A673 (cell line): ENCODE measurements at regions of chr11 and their contacts with region 1.

Region 1: GRCh38 chr11:71448257-71449171 is at the start of gene DHCR7:
- DNase-seq: peak; percentile 98
- H3K4me3 ChIP-seq: peak within 1 kb of the TSS; percentile 67
- H3K27ac ChIP-seq: peak within 1 kb of the TSS; percentile 85
- H3K4me1 ChIP-seq: peaks cover 27% of the 10 kb centered on the region
- H3K27me3 ChIP-seq: no peaks in the 10 kb centered on the region
- CTCF ChIP-seq: no peak
- total RNA-seq, gene DHCR7: 271 and 286 TPM in 2 replicates

Region 2: GRCh38 chr11:71532036-71532610 is 83.6 kb after region 1 on chr11:
- CTCF ChIA-PET with region 1: no interaction called
- POLR2A ChIA-PET with region 1: interaction called, 12 read pairs
- intact Hi-C with region 1: no loop called
- DNase-seq: no peak
- H3K4me3 ChIP-seq: no peak overlapping the region
- H3K27ac ChIP-seq: no peak overlapping the region
- H3K4me1 ChIP-seq: no peaks in the 10 kb centered on the region
- H3K27me3 ChIP-seq: no peaks in the 10 kb centered on the region
- CTCF ChIP-seq: no peak

Region 3: DNA sequence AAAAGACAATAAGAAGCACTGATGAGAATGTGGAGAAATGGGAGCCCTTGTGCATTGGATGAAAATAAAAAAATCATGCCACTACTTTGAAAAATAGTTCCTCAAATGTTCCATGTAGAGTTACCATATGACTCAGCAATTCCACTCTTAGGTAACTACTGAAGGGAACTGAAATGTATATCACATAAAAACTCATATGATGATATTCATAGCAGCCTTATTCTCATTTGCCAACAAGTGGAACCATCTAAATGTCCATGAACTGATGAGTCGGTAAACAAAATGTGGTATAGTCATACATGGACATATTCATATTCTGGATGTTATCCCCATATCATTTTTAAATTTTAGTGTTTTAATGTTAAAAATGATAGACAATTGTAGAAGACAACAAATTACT is 103.2 kb after region 1 on chr11:
- CTCF ChIA-PET with region 1: interaction called, 11 read pairs
- POLR2A ChIA-PET with region 1: no interaction called
- intact Hi-C with region 1: no loop called
- DNase-seq: no peak
- H3K4me3 ChIP-seq: no peak overlapping the region
- H3K27ac ChIP-seq: no peak overlapping the region
- H3K4me1 ChIP-seq: no peaks in the 10 kb centered on the region
- H3K27me3 ChIP-seq: no peaks in the 10 kb centered on the region
- CTCF ChIP-seq: no peak